HEK293 (cell line): ENCODE measurements at regions of chr19 and their contacts with region 1.

Region 1: DNA sequence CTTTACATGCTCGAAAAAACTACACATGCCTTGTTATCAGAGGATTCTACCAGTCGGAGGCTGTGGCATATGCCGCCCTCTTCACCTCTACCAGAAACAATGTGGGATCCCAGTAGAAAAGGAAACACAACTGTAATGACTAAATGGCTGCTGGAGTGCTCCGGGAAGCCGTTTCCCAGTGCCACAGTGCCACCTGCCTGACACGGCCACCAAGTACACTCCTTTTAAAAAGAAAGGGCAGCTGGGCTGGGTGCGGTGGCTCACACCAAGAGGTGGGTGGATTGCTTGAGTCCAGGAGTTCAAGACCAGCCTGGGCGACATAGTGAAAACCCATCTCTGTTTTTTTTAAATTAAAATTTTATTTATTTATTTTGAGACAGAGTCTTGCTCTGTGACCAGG is 67.3 kb downstream of the TRPM4 start:
- H3K4me3 ChIP-seq: no peak overlapping the region
- H3K27ac ChIP-seq: no peak overlapping the region
- H3K4me1 ChIP-seq: no peaks in the 10 kb centered on the region
- CTCF ChIP-seq: peak; percentile 74

Region 2: GRCh38 chr19:48999481-49000325 is 225.2 kb before region 1 on chr19:
- CTCF ChIA-PET with region 1: interaction called, 23 read pairs
- POLR2A ChIA-PET with region 1: no interaction called
- H3K4me3 ChIP-seq: no peak overlapping the region
- H3K27ac ChIP-seq: no peak overlapping the region
- H3K4me1 ChIP-seq: 0 out of 2 replicates have a peak, but pooled peaks cover 3% of the 10 kb centered on the region
- CTCF ChIP-seq: peak; percentile 59; the same call in 1 of the 2 replicates

Region 3: GRCh38 chr19:49097455-49098288 is 127.2 kb before region 1 on chr19:
- CTCF ChIA-PET with region 1: interaction called, 35 read pairs
- POLR2A ChIA-PET with region 1: no interaction called
- H3K4me3 ChIP-seq: no peak overlapping the region
- H3K27ac ChIP-seq: peak overlapping the region; percentile 48
- H3K4me1 ChIP-seq: peaks cover 8% of the 10 kb centered on the region
- CTCF ChIP-seq: peak; percentile 94

Region 4: GRCh38 chr19:49113762-49114629 is 110.9 kb before region 1 on chr19 and contains the start of gene LIN7B:
- CTCF ChIA-PET with region 1: interaction called, 13 read pairs
- POLR2A ChIA-PET with region 1: no interaction called
- H3K4me3 ChIP-seq: peak within 1 kb of the TSS; percentile 69
- H3K27ac ChIP-seq: peak within 1 kb of the TSS; percentile 84
- H3K4me1 ChIP-seq: peaks cover 14% of the 10 kb centered on the region
- CTCF ChIP-seq: peak; percentile 31; the same call in 1 of the 2 replicates

Region 5: DNA sequence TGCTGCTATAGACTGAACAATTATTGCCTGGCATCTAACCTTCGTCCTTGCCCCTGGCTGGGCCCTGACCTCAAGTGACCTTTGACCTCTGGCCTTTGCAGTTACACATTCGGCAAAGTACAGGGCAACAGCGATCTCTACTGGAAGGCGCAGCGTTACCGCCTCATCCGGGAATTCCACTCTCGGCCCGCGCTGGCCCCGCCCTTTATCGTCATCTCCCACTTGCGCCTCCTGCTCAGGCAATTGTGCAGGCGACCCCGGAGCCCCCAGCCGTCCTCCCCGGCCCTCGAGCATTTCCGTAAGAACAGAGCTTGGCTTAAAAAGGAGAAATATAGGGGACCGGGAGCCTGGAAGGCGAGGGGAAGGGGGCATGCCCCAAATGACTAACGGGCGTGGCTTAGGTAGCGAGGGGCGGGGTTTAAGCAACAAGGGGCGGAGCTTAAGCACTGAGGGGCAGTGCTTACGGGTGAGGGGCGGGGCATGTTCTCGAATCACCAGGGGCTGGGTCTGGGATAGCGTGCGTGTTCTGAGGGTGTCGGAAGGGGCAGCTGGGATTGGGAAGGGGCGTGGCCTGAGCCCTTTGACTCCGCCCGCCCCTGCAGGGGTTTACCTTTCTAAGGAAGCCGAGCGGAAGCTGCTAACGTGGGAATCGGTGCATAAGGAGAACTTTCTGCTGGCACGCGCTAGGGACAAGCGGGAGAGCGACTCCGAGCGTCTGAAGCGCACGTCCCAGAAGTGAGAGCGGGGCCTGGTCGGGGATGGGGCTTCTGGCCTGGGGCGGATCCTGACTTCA is 14.6 kb before region 1 on chr19:
- CTCF ChIA-PET with region 1: interaction called, 113 read pairs
- POLR2A ChIA-PET with region 1: no interaction called
- H3K4me3 ChIP-seq: no peak overlapping the region
- H3K27ac ChIP-seq: no peak overlapping the region
- H3K4me1 ChIP-seq: peaks cover 6% of the 10 kb centered on the region; the same call in 1 of the 2 replicates
- CTCF ChIP-seq: no peak

Region 6: DNA sequence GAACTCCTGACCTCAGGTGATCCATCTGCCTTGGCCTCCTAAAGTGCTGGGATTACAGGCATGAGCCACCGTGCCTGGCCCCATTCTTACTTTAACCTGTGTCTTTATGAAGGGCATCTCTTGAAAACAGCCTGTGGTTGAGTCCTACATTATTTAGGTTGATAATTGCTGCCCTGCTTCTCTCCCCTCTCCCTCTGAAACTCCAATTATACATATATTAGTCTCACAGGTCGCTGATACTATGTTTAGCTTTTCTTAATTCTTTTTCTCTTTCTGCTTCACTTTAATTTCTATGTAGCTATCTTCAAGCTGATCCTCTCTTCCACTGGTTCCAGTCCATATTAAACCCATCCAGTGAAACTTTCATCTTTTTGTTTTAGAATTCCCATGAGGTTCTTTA is 25.1 kb after region 1 on chr19:
- CTCF ChIA-PET with region 1: interaction called, 19 read pairs
- POLR2A ChIA-PET with region 1: no interaction called
- H3K4me3 ChIP-seq: no peak overlapping the region
- H3K27ac ChIP-seq: no peak overlapping the region
- H3K4me1 ChIP-seq: no peaks in the 10 kb centered on the region
- CTCF ChIP-seq: no peak

Region 7: DNA sequence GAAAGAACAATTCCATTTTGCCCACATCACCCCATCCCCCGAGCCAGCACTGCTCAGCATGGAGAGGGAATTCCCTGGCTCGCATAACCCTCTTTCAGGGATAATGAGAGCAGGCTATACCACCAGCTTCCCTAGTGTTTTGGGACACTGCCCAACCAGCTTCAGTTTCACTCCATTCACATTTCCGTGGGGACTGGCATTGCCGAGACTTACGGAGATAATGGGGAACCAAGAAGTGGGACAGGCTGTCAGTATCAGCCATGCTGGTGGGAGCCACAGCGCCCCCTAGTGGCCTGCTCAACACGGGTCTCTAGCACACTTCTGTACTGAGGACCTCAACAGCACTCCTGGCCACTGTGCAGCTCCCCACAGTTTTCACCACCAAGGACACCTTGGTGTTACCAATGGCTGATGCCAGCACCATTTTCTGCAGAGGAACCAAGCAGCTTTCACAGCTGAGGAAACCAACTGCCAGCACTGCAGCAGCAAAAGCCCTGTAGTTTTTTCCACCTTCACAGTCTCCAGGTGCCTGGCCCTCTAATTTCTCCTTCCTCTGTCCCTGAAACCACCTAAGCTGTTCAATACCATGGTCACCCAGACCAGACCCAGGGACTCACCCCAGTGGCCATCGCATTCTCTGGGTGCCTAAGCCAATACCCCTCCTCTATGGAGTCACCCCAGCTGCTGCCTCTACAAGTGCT is 76.5 kb after region 1 on chr19:
- CTCF ChIA-PET with region 1: interaction called, 47 read pairs
- POLR2A ChIA-PET with region 1: no interaction called
- H3K4me3 ChIP-seq: peak overlapping the region; percentile 41
- H3K27ac ChIP-seq: no peak overlapping the region
- H3K4me1 ChIP-seq: no peaks in the 10 kb centered on the region
- CTCF ChIP-seq: peak; percentile 90

Region 8: GRCh38 chr19:49640113-49640898 is 415.4 kb after region 1 on chr19 and contains the start of gene RRAS:
- CTCF ChIA-PET with region 1: no interaction called
- POLR2A ChIA-PET with region 1: no interaction called
- H3K4me3 ChIP-seq: peak within 1 kb of the TSS; percentile 51
- H3K27ac ChIP-seq: peak within 1 kb of the TSS; percentile 98
- H3K4me1 ChIP-seq: peaks cover 31% of the 10 kb centered on the region
- CTCF ChIP-seq: no peak